HEK293T (cell line): ENCODE measurements at regions of chr5 and their contacts with region 1.

Region 1: GRCh38 chr5:79020861-79021561 is 35.9 kb upstream of the ARSB start:
- DNase-seq: peak; percentile 66

Region 2: DNA sequence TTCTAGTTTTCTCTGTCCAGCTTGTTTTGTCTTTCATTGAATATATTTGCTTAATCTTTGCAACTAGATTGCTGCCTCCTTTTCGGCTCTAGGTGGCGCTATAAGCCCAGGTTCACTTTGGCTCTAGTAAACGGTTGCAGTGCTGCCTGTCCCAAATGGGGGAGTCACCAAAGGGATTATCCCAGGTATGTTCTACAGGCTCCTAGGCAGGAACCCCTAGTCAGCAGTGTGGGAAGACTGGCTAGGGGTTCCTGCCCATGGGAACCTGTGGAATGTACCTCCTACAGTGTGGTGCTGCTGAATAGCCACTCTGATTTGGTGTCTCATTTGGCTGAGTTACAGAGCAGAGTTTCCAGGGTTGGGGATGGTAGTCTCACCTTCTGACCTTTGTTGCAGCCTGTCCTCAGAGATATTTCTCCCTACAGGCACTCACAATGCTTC is 121.1 kb before region 1 on chr5:
- CTCF ChIA-PET with region 1: interaction called, 16 read pairs
- POLR2A ChIA-PET with region 1: no interaction called
- DNase-seq: peak; percentile 55

Region 3: DNA sequence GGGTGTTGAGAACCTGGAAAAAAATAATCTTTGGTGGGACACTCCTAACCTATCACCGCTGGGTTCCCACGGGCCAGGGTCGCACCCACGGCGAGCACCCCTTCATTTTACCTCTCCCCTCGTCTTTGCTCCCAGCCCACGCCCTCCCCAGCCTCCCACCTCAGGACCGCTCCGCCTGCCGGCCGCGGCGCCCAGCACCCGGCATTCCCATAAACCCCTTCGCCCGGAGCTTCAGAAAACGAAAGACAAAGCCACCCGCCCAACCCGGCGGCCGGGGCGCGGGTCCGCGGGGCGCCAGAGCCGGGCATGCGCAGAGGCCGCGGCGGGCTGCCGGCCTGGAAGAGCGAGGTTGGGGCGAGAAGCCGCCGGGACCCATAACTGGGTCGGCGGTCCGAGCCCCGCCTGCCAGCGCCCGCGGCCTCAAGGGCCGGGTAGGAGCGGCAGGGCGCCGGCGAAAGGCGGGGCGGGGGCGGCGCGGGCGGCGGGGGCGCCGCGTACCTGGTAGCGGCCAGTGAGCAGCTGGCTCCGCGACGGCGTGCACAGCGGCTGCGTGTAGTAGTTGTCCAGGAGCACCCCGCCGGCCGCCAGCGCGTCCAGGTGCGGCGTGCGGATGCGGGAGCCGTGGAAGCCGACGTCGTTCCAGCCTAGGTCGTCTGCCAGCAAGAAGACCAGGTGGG is 36.4 kb before region 1 on chr5:
- CTCF ChIA-PET with region 1: interaction called, 9 read pairs
- POLR2A ChIA-PET with region 1: interaction called, 29 read pairs
- DNase-seq: peak; percentile 90

Region 4: GRCh38 chr5:79042188-79042587 is 21.2 kb after region 1 on chr5:
- CTCF ChIA-PET with region 1: interaction called, 12 read pairs
- POLR2A ChIA-PET with region 1: no interaction called
- DNase-seq: no peak

Region 5: GRCh38 chr5:79109527-79110492 is 88.8 kb after region 1 on chr5:
- CTCF ChIA-PET with region 1: interaction called, 25 read pairs
- POLR2A ChIA-PET with region 1: no interaction called
- DNase-seq: peak; percentile 28

Region 6: GRCh38 chr5:79133657-79134451 is 112.8 kb after region 1 on chr5:
- CTCF ChIA-PET with region 1: interaction called, 200 read pairs
- POLR2A ChIA-PET with region 1: interaction called, 5 read pairs
- DNase-seq: peak; percentile 58

Region 7: GRCh38 chr5:79464695-79465332 is 443.8 kb after region 1 on chr5:
- CTCF ChIA-PET with region 1: interaction called, 10 read pairs
- POLR2A ChIA-PET with region 1: no interaction called
- DNase-seq: peak; percentile 32